ENCODE measurements at regions of chr18 and their contacts with region 1.

Region 1: DNA sequence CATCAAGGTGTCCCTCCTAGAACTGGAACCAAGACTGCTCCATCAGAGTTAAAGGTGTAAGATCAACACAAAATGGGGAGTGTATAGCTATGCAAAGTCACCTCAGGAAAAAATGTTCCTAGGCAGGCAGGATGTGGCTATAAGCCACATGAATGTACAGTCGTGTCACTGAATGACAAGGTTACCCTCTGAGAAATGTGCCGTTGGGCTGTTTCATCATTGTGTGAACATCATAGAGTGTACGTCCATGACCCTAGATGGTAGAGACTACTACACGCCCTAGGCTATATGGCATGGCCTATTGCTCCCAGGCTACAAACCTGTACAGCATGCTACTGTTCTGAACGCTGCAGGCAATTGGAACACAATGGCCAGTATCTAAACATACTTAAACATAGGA is 24.5 kb downstream of the TYMS start:
- DNase-seq: peak; percentile 81
- H3K4me3 Mint-ChIP-seq: no peak overlapping the region
- H3K27ac Mint-ChIP-seq: peak overlapping the region; percentile 90
- H3K4me1 Mint-ChIP-seq: peaks cover 30% of the 10 kb centered on the region
- H3K27me3 Mint-ChIP-seq: no peaks in the 10 kb centered on the region

Region 2: DNA sequence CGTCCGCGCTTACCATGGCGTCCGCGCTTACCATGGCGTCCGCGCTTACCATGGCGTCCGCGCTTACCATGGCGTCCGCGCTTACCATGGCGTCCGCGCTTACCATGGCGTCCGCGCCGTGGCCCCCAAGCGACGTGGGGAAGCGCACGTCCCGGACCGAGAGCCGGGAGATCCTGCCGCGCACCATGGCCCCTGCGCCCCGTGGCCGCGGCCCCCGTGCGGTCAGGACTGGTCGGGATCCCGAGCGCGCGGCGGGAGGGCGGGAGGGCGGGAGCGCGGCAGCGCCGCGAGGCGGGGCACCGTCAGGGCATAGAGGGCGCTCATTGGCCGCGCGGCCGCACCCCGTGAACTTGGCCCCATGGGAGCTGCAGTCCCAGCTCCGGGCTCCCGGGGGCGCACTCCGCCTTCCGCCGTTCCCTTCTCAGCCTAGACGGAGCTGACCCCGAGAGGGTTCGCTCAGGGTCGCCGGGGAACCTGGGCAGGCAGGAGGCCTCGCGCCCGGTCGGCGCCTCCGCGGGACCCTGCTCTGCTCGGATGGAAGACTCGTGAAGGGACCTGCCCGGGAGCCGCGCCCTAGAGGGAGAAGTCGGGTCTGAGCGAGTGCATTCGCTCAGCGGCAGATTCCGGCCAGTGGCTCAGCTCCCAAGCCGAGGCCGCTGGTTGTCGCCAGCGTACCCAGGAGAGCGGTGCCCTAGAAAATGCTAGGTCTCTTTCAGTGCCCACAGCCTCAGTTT is 30.6 kb after region 1 on chr18 and contains the start of gene ENOSF1:
- CTCF ChIA-PET with region 1: interaction called, 11 read pairs
- DNase-seq: peak; percentile 90
- H3K4me3 Mint-ChIP-seq: peak within 1 kb of the TSS; percentile 82
- H3K27ac Mint-ChIP-seq: peak within 1 kb of the TSS; percentile 96
- H3K4me1 Mint-ChIP-seq: peaks cover 44% of the 10 kb centered on the region
- H3K27me3 Mint-ChIP-seq: peaks cover 14% of the 10 kb centered on the region

Measured in activated naive CD4-positive, alpha-beta T cell treated with anti-CD3 and anti-CD28 coated beads, Interleukin-2, amount 10 ng/mL, durations not matched to agents 7 days and 5 days (primary cell).